ENCODE measurements at regions of chr5 and their contacts with region 1.

Region 1: DNA sequence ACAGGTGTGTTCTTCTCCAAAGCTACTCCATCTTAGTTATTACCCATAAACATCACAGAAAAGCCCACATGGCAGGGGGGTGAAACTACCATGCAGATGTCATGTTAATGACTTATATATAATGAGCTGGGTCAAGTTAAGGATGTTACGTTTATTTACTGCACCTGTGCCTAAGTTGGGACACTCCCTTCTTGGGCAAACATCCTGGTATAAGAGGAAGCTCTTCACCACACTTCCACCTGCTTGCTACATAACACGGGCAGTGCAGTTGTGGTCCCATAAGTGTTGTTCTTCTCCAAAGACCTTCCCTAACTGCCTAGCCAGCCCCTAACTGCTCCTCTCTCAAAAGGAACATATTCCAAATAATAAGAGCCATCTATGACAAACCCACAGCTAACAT is 9.3 kb upstream of the ZCCHC9 start:
- DNase-seq: no peak
- ATAC-seq: no peak

Region 2: GRCh38 chr5:81207009-81207408 is 85.1 kb before region 1 on chr5:
- intact Hi-C with region 1: loop called (anchors 10 kb)
- DNase-seq: no peak
- ATAC-seq: peak; percentile 14

Region 3: GRCh38 chr5:81675846-81676245 is 383.7 kb after region 1 on chr5:
- intact Hi-C with region 1: no loop called
- DNase-seq: no peak
- ATAC-seq: no peak

Measured in Right ventricle myocardium superior (tissue), 1 donor.